ENCODE measurements at regions of chr5 and their contacts with region 1.

Region 1: GRCh38 chr5:81425569-81425968 is 31.6 kb upstream of the ACOT12 start:
- DNase-seq: no peak
- H3K4me3 ChIP-seq: no peak overlapping the region
- H3K27ac ChIP-seq: peak overlapping the region; percentile 37 to 46
- H3K4me1 ChIP-seq: peaks cover 0 to 23% (median 7%) of the 10 kb centered on the region in 4 donors
- H3K27me3 ChIP-seq: no peaks in the 10 kb centered on the region
- CTCF ChIP-seq: peak; percentile 61 to 70

Region 2: DNA sequence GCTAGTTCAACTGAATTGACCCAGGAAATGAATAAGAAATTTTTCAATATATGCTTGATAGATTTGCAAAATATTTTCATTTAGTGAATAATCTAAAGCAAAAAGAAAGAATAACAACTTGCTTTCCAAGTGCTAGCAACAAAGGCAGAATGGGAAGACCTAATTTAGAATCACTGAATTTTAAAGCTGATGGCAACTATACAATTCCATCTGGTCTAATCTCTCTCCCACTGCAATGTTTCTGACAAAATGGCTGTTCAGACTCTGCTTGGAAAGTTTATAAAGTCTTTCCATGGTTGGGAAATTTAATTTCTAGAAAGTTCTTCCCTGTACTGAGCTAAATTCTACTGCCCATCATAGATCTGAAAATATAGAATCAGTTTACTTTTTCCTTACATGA is 44.1 kb after region 1 on chr5:
- intact Hi-C with region 1: no loop called
- DNase-seq: no peak
- H3K4me3 ChIP-seq: no peak overlapping the region
- H3K27ac ChIP-seq: no peak overlapping the region
- H3K4me1 ChIP-seq: no peaks in the 10 kb centered on the region
- H3K27me3 ChIP-seq: no peaks in the 10 kb centered on the region
- CTCF ChIP-seq: no peak

Region 3: GRCh38 chr5:81506900-81507588 is 81.5 kb after region 1 on chr5:
- intact Hi-C with region 1: loop called (anchors 10 kb)
- DNase-seq: peak; percentile 71 to 76
- H3K4me3 ChIP-seq: no peak overlapping the region
- H3K27ac ChIP-seq: peak overlapping the region; percentile 41 to 51
- H3K4me1 ChIP-seq: peaks cover 0 to 23% (median 4%) of the 10 kb centered on the region in 4 donors
- H3K27me3 ChIP-seq: no peaks in the 10 kb centered on the region
- CTCF ChIP-seq: peak; percentile 83 to 91

Region 4: DNA sequence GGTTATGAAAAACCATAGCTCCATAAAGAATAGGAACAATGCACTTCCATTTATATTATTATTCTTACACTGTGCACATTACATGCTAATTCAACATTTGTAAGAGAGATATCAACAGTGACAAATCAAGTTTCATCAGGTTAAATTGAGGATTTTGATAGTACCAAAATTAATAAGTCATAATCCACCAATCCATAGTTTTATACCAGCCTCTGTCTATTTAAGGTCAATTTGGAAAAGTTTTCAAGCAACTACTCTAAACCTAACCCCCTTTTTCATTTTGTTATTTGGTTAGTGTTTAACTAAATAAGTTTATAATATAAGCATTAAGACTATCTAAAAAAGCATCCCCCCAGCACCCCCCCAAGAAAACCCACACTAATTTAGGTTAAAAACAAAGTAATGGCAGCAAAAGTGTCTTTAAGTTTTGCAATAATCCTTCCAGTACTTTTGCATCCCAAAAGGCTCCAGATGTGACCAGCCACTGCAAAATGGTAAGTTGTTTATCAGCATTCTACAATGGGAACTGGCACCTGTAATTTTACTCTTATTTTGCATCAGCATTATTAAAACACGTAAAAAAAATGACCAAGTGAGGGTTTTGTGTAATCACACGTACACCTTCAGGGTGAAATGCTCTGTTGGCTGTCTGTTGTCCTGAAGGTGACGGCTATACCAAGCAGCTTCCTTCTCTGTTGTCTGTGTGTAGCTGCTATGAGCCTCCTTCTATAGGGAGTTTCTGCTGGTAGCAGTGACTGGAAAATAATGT is 362.1 kb after region 1 on chr5:
- intact Hi-C with region 1: no loop called
- DNase-seq: peak; percentile 78 to 88
- H3K4me3 ChIP-seq: no peak overlapping the region
- H3K27ac ChIP-seq: peak overlapping the region; percentile 41 to 53
- H3K4me1 ChIP-seq: peaks cover 0 to 35% (median 24%) of the 10 kb centered on the region in 4 donors
- H3K27me3 ChIP-seq: no peaks in the 10 kb centered on the region
- CTCF ChIP-seq: no peak

Region 5: GRCh38 chr5:82165740-82166530 is 740.4 kb after region 1 on chr5:
- intact Hi-C with region 1: loop called (anchors 2 kb)
- DNase-seq: peak; percentile 82 to 84
- H3K4me3 ChIP-seq: no peak overlapping the region
- H3K27ac ChIP-seq: peak overlapping the region in 1 of 2 donors; percentile 3
- H3K4me1 ChIP-seq: peaks cover 0 to 24% (median 14%) of the 10 kb centered on the region in 4 donors
- H3K27me3 ChIP-seq: no peaks in the 10 kb centered on the region
- CTCF ChIP-seq: peak; percentile 77 to 83

Region 6: DNA sequence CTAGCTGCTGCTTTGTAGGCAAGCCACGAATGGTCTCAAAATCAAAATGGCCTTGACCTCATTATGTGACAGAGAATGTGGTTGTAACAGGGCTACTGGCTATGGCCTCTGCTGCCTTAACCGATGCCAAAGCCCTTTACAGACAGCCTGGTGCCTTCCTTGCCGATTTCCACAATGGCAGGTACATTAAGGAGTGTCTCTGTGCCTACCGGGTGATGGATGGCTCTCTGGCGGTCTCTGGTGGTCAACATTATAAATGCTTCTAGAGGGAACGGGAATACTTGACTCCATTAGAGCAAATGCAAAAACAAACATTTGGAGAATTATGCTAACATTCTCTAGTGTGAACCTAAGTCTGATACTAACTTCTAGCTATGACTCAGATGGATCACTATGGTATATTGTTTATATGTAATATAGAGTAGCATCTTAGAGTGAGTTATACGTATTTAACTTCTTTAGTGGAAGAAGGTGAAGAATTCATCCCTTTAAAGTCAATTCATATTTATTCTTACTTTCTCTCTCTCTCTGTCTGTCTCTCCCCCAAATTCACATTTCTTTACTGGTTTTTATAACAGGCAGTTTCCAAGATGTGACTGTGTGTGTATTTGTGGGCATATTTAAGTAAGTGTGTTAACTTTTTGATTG is 800.1 kb after region 1 on chr5:
- intact Hi-C with region 1: loop called (anchors 10 kb)
- DNase-seq: peak; percentile 51 to 67
- H3K4me3 ChIP-seq: no peak overlapping the region
- H3K27ac ChIP-seq: no peak overlapping the region
- H3K4me1 ChIP-seq: no peaks in the 10 kb centered on the region
- H3K27me3 ChIP-seq: no peaks in the 10 kb centered on the region
- CTCF ChIP-seq: peak; percentile 64 to 75

Measured in tibial artery (tissue), 4 donors.